CD14-positive monocyte (primary cell): ENCODE measurements at regions of chr11 and their contacts with region 1.

Region 1: GRCh38 chr11:45110562-45110961 is 35.9 kb upstream of the PRDM11 start:
- DNase-seq: peak; percentile 37 to 59 (median 53)
- H3K4me3 ChIP-seq: no peak overlapping the region
- H3K4me3 Mint-ChIP-seq: no peak overlapping the region
- H3K27ac ChIP-seq: no peak overlapping the region
- H3K27ac Mint-ChIP-seq: no peak overlapping the region
- H3K4me1 ChIP-seq: no peaks in the 10 kb centered on the region
- H3K4me1 Mint-ChIP-seq: peaks cover 5% of the 10 kb centered on the region
- H3K27me3 ChIP-seq: no peaks in the 10 kb centered on the region
- H3K27me3 Mint-ChIP-seq: peaks cover 2 to 16% (median 7%) of the 10 kb centered on the region in 3 donors
- CTCF ChIP-seq: peak; percentile 68

Region 2: DNA sequence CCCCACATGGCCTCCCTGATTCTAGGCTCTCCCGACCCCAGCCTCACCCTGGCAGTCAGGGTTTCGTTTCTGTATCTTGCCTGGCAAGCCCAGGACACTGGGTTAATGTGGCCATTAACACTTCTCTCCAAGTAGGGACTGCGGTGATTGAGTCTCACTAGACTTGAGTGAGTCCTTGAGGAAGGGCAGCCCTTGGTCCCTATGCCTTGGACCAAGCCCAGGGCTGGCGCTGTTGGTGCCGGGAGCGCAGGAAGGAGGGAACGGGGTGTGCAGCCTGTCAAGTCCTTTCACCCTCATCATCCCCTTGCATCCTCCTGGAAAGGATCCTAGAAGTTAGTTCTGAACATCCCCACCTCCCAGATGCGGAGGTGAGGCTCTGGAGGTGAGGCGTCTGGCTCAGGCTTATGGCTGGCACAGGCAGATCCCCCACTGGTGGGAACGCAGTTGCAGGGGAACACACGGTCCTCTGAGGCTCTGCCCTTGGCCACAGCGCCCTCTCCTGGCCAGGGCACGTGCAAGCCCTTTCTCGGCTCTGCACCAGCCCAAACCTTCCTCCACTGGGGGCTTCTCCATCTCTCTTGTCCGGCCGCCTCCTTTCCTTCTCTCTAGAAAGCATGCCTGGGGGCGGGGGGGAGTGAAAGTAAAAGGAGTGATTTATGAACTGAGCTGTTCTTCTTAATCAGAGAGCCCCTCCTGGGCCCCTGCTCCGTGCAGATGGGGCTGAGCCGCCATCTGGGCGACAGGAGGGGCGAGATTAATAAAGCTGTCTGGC is 216.5 kb before region 1 on chr11:
- intact Hi-C with region 1: no loop called
- DNase-seq: peak in 1 of 3 donors; percentile 21
- H3K4me3 ChIP-seq: no peak overlapping the region
- H3K4me3 Mint-ChIP-seq: no peak overlapping the region
- H3K27ac ChIP-seq: no peak overlapping the region
- H3K27ac Mint-ChIP-seq: peak overlapping the region in 2 of 7 donors; percentile 26 to 50
- H3K4me1 ChIP-seq: no peaks in the 10 kb centered on the region
- H3K4me1 Mint-ChIP-seq: no peaks in the 10 kb centered on the region
- H3K27me3 ChIP-seq: no peaks in the 10 kb centered on the region
- H3K27me3 Mint-ChIP-seq: peaks cover 5 to 21% (median 5%) of the 10 kb centered on the region in 3 donors
- CTCF ChIP-seq: peak; percentile 62

Region 3: GRCh38 chr11:45298718-45299117 is 188.2 kb after region 1 on chr11:
- intact Hi-C with region 1: loop called (anchors 10 kb)
- DNase-seq: no peak
- H3K4me3 ChIP-seq: no peak overlapping the region
- H3K4me3 Mint-ChIP-seq: no peak overlapping the region
- H3K27ac ChIP-seq: no peak overlapping the region
- H3K27ac Mint-ChIP-seq: peak overlapping the region in 1 of 7 donors; percentile 7
- H3K4me1 ChIP-seq: no peaks in the 10 kb centered on the region
- H3K4me1 Mint-ChIP-seq: no peaks in the 10 kb centered on the region
- H3K27me3 ChIP-seq: peaks cover 0 to 2% of the 10 kb centered on the region in 2 donors
- H3K27me3 Mint-ChIP-seq: peaks cover 2 to 11% (median 6%) of the 10 kb centered on the region in 3 donors
- CTCF ChIP-seq: no peak

Region 4: GRCh38 chr11:45332276-45332934 is 221.8 kb after region 1 on chr11:
- intact Hi-C with region 1: loop called (anchors 1 to 2 kb)
- DNase-seq: peak; percentile 5 to 35 (median 22)
- H3K4me3 ChIP-seq: no peak overlapping the region
- H3K4me3 Mint-ChIP-seq: no peak overlapping the region
- H3K27ac ChIP-seq: no peak overlapping the region
- H3K27ac Mint-ChIP-seq: peak overlapping the region in 1 of 7 donors; percentile 21
- H3K4me1 ChIP-seq: no peaks in the 10 kb centered on the region
- H3K4me1 Mint-ChIP-seq: no peaks in the 10 kb centered on the region
- H3K27me3 ChIP-seq: no peaks in the 10 kb centered on the region
- H3K27me3 Mint-ChIP-seq: peaks cover 7 to 10% (median 8%) of the 10 kb centered on the region in 3 donors
- CTCF ChIP-seq: peak; percentile 95